Ascending aorta (tissue), 2 donors: ENCODE measurements at regions of chr15 and their contacts with region 1.

Region 1: DNA sequence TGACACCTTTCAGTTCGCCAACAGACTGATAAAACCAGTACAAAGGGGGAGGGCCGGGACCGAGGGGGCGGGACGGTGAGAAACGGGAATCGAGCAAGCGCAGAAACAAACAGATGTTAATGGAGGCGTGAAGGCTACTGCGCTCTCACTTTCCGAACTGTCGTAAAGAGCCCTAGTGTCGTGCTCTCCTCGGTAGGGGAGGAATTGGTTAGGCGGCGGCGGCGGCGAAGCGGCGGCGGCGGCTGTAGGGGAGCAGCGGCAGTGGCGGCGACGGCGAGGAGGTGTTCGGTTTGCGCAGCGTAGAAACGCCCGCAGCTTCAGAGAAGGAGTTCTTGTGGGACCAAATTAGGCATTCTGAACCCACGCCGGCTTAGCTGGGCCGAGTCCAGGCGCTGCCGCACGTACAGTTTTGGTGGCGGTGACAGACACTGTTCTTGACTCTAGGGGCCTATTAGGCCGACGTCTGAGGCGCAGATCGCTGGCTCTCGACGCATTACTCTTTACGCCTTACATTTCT is at the start of gene RNF111:
- DNase-seq: peak; percentile 73 to 95
- H3K4me3 ChIP-seq: peak within 1 kb of the TSS; percentile 76 to 96
- H3K27ac ChIP-seq: peak within 1 kb of the TSS; percentile 83 to 84
- H3K4me1 ChIP-seq: peaks cover 0 to 3% of the 10 kb centered on the region in 2 donors
- H3K27me3 ChIP-seq: no peaks in the 10 kb centered on the region
- CTCF ChIP-seq: no peak
- total RNA-seq, gene RNF111: 12.2 TPM

Region 2: GRCh38 chr15:58933281-58934113 is 54.0 kb before region 1 on chr15 and contains the start of gene SLTM:
- intact Hi-C with region 1: loop called (anchors 1 kb)
- DNase-seq: peak; percentile 73 to 98
- H3K4me3 ChIP-seq: peak within 1 kb of the TSS; percentile 83 to 92
- H3K27ac ChIP-seq: peak within 1 kb of the TSS; percentile 98
- H3K4me1 ChIP-seq: peaks cover 0 to 13% of the 10 kb centered on the region in 2 donors
- H3K27me3 ChIP-seq: no peaks in the 10 kb centered on the region
- CTCF ChIP-seq: peak in 2 of 3 experiments; percentile 20 to 24
- total RNA-seq, gene SLTM: 109 TPM

Region 3: DNA sequence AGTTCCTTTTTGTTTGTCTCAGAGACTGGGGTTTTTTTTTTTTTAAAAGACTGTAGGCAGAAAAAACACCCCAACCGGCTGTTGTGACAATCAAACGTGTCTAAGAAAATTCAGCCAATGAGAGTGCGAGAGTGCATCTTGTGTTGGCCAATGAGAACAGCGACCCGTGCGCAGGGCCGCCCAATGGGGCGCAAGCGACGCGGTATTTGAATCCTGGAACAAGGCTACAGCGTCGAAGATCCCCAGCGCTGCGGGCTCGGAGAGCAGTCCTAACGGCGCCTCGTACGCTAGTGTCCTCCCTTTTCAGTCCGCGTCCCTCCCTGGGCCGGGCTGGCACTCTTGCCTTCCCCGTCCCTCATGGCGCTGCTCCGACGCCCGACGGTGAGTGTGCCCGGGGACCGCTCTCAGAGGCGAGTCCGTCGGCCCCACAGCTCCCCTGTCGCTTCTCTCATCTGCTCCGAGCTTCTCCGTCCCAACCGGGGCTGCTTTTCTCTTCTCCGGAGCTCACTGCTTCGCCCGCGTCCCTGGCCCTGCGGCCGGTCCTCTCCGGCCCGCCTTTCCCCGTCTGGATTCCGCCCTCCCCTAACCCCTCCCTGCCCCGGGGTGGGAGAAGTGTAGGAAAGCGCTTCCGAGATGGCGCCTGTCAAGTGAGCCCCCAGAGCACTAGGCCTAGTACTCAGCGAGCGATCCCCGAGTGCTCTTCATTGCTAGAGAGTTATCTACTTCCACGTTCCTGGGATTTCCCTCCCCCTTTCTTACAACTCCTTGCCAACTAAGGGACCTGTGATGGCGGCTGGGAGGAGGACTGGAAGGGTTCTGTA is 117.6 kb after region 1 on chr15 and contains the start of gene CCNB2:
- intact Hi-C with region 1: loop called (anchors 10 kb)
- DNase-seq: peak; percentile 51 to 91
- H3K4me3 ChIP-seq: peak within 1 kb of the TSS; percentile 64 to 71
- H3K27ac ChIP-seq: no peak within 1 kb of the TSS
- H3K4me1 ChIP-seq: peaks cover 0 to 3% of the 10 kb centered on the region in 2 donors
- H3K27me3 ChIP-seq: no peaks in the 10 kb centered on the region
- CTCF ChIP-seq: no peak
- total RNA-seq, gene CCNB2: not detected

Region 4: DNA sequence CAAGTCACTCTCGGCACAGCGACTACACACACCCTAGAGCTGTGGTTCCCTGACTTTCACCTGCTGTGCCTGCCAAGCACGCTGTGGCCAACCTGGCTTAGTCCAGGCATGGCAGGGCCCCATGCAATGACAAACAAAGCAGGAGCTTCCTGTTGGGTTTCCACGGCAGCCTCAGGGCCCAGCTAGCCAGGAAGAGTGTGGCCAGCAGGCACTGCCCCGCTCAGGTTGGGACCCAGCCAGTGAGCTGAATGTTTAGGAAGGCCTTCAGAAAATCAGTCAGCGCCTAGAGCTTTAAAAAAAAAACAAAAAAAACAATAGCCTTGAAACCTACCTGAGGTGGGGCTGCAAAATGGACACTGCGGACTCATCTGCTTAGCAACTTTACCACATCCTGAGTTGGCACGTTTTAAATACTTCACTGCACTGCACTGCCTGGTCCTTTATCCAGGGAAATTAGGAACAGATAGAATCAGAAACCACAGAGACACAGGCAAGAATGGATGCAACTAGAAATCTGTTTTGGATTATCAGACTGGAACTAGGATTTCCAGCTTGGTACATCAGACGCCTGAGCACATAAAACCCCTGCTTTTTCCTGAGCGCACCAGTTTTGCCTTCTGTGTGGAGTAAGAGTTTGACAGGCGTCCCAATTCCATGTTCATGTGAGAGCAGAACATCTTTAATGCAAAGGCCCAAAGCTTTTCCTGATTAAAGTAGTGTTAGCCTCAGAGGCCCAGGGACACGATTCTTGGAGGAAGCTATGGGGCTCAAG is 182.9 kb after region 1 on chr15:
- intact Hi-C with region 1: loop called (anchors 5 kb)
- DNase-seq: peak; percentile 84 to 91
- H3K4me3 ChIP-seq: no peak overlapping the region
- H3K27ac ChIP-seq: peak overlapping the region; percentile 92 to 97
- H3K4me1 ChIP-seq: peaks cover 12 to 55% of the 10 kb centered on the region in 2 donors
- H3K27me3 ChIP-seq: no peaks in the 10 kb centered on the region
- CTCF ChIP-seq: no peak

Region 5: DNA sequence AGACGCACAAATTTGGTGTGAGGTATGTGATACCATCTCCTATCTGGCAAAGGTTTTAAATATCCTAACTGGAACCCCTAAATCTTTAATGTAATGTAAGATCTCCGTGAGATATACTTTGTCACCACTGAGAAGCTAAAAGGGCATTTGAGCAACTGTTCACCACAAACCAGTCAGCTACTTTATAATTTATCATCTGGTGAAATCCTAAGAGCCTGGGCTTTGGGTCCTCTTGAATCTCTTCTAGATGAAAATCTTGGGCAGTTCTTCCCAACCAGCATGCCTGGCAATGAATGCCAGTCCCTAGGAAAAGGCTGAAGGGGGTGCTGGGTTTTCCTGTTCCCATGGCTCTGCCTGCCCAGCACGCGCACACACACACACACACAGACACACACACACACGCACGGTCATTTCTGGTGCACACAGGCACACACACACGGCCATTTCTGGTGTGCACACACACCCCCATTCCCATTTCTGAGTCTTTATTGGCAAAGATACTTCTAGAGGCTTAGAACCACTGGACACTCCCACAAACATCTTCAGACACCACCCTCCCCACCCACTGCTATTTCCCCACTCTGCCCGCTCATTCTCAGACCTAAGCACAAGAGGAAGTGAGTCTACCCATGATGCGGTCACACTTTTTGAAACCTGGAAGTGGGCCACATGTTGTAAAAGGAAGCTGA is 312.5 kb after region 1 on chr15:
- intact Hi-C with region 1: loop called (anchors 10 kb)
- DNase-seq: peak; percentile 81 to 96
- H3K4me3 ChIP-seq: peak overlapping the region in 1 of 2 donors; percentile 23
- H3K27ac ChIP-seq: peak overlapping the region; percentile 61 to 64
- H3K4me1 ChIP-seq: peaks cover 16 to 53% of the 10 kb centered on the region in 2 donors
- H3K27me3 ChIP-seq: no peaks in the 10 kb centered on the region
- CTCF ChIP-seq: no peak

Region 6: DNA sequence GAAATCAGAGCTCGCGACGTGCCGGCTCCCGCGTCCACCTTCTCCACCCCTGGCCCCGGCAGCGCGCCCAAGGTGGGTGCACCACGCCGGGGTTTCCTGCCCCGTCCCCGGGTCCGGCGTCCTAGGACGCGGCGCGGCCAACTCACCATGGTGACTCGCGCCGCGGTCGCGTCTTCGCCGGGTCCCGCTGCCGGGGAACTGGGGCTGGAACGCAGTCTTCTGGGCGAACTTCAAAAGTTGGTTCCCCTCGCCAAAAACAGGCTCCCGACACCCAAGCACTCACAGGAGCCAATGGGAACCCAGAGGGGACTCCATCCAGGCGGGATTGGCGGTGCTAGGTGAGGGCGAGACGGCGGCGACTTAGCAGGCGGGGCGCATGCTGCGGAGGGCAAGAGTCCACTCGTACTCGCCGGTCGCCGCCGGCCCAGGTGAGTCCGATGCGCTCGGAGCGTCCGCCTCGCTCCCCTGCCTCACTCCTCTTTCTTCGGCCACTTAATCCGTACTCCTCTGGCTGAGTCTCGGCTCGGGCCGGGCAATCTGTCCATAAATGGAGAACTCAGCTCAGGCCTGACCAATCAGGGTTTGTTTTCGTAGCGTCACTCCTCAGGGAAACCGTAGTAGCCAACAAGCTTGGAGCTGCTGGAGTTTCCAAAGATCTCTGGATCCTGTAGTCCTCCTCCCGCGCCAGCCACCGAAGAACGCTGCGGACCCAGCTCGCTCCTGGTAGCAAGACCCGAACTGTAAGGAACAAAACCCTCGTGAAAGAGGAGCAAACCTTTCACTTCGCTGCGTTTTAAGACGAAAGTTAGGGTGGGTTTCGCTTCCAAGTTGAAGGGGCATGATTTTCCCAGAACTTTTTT is 385.0 kb after region 1 on chr15 and contains the start of gene MYO1E:
- intact Hi-C with region 1: loop called (anchors 10 kb)
- DNase-seq: peak; percentile 78 to 95
- H3K4me3 ChIP-seq: peak within 1 kb of the TSS; percentile 73 to 99
- H3K27ac ChIP-seq: peak within 1 kb of the TSS; percentile 91 to 99
- H3K4me1 ChIP-seq: no peaks in the 10 kb centered on the region
- H3K27me3 ChIP-seq: no peaks in the 10 kb centered on the region
- CTCF ChIP-seq: no peak
- total RNA-seq, gene MYO1E: 48.0 TPM

Region 7: GRCh38 chr15:59437817-59438562 is 450.4 kb after region 1 on chr15 and contains the start of gene FAM81A:
- intact Hi-C with region 1: loop called (anchors 5 kb)
- DNase-seq: peak; percentile 11 to 92
- H3K4me3 ChIP-seq: peak within 1 kb of the TSS; percentile 59 to 83
- H3K27ac ChIP-seq: peak within 1 kb of the TSS in 1 of 2 donors; percentile 15
- H3K4me1 ChIP-seq: peaks cover 0 to 12% of the 10 kb centered on the region in 2 donors
- H3K27me3 ChIP-seq: no peaks in the 10 kb centered on the region
- CTCF ChIP-seq: no peak
- total RNA-seq, gene FAM81A: not detected